ENCODE measurements at regions of chr10 and their contacts with region 1.

Region 1: DNA sequence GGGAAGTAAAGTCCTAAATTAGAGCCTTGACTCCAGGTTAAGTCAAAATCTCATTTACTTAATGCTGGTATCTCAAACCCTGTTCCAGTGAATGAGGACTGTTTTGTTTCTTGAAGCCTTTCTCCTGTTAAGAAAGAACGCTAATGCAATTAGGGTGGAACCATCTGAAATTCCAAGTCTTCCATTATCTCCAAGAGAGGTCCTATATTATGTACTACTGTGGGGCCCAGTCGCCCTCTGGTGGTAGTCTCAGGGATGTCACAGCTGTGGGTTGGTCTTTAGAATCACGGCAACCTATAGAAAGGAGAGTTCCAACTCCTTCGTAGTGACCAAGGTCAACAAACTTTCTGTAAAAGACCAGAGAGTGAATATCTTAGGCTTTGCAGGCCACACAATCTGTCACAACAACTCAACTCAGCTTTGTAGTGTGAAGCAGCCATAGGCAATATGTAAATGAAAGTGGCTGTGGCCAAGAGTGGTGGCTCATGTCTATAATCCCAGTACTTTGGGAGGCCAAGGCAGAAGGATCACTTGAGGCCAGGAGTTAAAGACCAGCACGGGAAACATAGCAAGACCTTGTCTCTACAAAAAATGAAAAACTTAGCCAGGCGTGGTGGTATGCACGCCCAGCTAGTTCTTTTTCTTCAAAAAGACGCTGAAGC is 9.3 kb downstream of the RPP38 start:
- DNase-seq: peak; percentile 85
- ATAC-seq: peak; percentile 100
- H3K4me3 Mint-ChIP-seq: no peak overlapping the region
- H3K27ac Mint-ChIP-seq: no peak overlapping the region
- H3K4me1 Mint-ChIP-seq: no peaks in the 10 kb centered on the region
- H3K27me3 Mint-ChIP-seq: no peaks in the 10 kb centered on the region
- CTCF ChIP-seq: peak; percentile 83

Region 2: GRCh38 chr10:14878266-14879054 is 228.0 kb before region 1 on chr10 and contains the start of gene SUV39H2:
- CTCF ChIA-PET with region 1: no interaction called
- POLR2A ChIA-PET with region 1: no interaction called
- DNase-seq: peak; percentile 95
- ATAC-seq: peak; percentile 80
- H3K4me3 Mint-ChIP-seq: peak within 1 kb of the TSS; percentile 94
- H3K27ac Mint-ChIP-seq: peak within 1 kb of the TSS; percentile 97
- H3K4me1 Mint-ChIP-seq: peaks cover 43% of the 10 kb centered on the region
- H3K27me3 Mint-ChIP-seq: no peaks in the 10 kb centered on the region
- CTCF ChIP-seq: no peak
- total RNA-seq, gene SUV39H2: 36.4 to 41.4 TPM (median 39.9 TPM) in 3 replicates

Region 3: GRCh38 chr10:14995964-14996565 is 110.4 kb before region 1 on chr10:
- CTCF ChIA-PET with region 1: interaction called, 12 read pairs
- POLR2A ChIA-PET with region 1: no interaction called
- DNase-seq: no peak
- ATAC-seq: no peak
- H3K4me3 Mint-ChIP-seq: no peak overlapping the region
- H3K27ac Mint-ChIP-seq: no peak overlapping the region
- H3K4me1 Mint-ChIP-seq: peaks cover 10% of the 10 kb centered on the region; the same call in 1 of the 2 replicates
- H3K27me3 Mint-ChIP-seq: peaks cover 3% of the 10 kb centered on the region; the same call in 1 of the 2 replicates
- CTCF ChIP-seq: no peak

Region 4: GRCh38 chr10:15015451-15015850 is 91.0 kb before region 1 on chr10:
- CTCF ChIA-PET with region 1: no interaction called
- POLR2A ChIA-PET with region 1: no interaction called
- DNase-seq: no peak
- ATAC-seq: no peak
- H3K4me3 Mint-ChIP-seq: no peak overlapping the region
- H3K27ac Mint-ChIP-seq: no peak overlapping the region
- H3K4me1 Mint-ChIP-seq: no peaks in the 10 kb centered on the region
- H3K27me3 Mint-ChIP-seq: peaks cover 6% of the 10 kb centered on the region
- CTCF ChIP-seq: no peak

Region 5: DNA sequence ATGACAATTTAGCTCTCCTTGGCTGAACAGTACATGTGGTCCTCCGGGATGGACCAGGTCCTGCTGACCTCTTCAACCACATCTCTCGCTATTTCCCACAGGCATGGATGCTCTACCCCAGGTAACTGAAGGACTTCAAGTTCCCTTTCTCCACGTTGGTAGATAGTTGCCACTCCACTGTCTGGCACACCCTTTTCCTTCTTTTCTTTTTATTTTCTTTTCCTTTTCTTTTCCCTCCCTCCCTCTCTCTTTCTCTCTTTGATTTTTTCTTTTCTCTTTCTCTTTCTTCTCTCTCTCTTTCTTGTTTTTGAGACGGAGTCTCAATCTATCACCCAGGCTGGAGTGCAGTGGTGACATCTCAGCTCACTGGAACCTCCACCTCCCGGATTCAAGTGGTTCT is 15.1 kb before region 1 on chr10:
- CTCF ChIA-PET with region 1: no interaction called
- POLR2A ChIA-PET with region 1: no interaction called
- DNase-seq: no peak
- ATAC-seq: no peak
- H3K4me3 Mint-ChIP-seq: no peak overlapping the region
- H3K27ac Mint-ChIP-seq: no peak overlapping the region
- H3K4me1 Mint-ChIP-seq: no peaks in the 10 kb centered on the region
- H3K27me3 Mint-ChIP-seq: peaks cover 27% of the 10 kb centered on the region
- CTCF ChIP-seq: no peak

Measured in WTC11 (cell line).